ENCODE measurements at regions of chr14 and their contacts with region 1.

Region 1: DNA sequence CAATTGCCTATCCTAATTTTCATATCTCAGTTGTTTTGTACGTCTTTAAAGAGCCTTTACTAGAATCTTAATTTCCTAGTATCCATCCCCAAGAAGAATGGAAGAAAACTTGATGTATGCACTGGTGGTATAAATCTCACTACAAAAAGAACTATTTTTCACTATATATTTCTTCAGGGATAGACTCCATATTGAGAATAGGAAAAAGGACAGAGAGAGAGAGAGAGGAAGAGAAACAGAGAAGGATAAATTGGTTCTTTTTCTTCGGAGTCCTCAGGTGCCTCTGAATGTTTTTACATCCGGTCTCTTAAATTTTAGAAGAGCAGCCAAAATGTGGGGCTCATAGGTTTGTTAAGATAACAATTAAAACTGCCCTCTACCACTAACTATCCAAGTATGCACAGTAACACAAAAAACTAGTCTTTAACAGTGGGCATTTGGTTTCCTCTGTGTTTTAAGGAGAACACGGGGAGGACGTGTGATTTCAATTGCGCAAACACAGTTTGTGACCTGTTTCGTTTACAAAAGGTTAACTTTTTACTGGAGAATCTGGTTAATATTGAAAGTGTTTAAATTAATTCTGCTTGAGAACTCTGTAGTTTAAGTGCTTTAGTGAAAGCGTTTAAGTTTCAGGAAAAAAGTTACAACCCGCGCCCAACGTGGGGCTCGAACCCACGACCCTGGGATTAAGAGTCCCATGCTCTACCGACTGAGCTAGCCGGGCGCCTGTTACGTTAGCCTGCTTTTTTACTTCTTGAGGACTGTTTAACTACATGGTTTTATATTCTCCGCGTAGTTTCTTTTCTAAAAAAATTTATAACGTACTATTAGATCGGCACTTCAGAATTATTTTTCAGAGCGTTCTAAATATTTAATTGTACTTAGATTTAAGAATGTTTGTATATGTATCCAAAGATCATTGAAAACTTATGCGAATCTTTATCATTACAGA is 5.1 kb upstream of the PSMA3 start:
- DNase-seq: peak; percentile 72 to 89
- ATAC-seq: peak; percentile 89
- H3K4me3 ChIP-seq: peak overlapping the region; percentile 97 to 99
- H3K27ac ChIP-seq: no peak overlapping the region
- H3K4me1 ChIP-seq: no peaks in the 10 kb centered on the region
- H3K27me3 ChIP-seq: no peaks in the 10 kb centered on the region

Region 2: DNA sequence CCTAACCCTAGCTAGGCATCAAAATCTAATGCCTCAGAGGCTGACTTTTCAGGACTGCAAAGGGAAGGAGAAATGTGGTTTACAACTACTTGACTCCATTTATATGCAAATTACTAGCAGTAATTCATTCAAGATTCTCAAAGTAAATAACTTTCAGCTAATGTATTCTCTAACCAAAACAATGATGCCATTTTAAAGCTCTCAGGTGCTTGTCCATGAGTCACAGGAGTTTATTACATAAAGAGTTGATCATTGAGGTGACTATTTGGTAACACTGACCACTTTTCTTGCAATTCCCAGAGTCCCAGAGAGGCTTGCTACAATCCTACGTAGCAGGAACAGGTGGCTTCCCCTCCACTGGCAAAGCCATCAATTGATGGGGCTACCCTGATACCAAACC is 264.6 kb before region 1 on chr14:
- intact Hi-C with region 1: no loop called
- DNase-seq: no peak
- ATAC-seq: no peak
- H3K4me3 ChIP-seq: no peak overlapping the region
- H3K27ac ChIP-seq: no peak overlapping the region
- H3K4me1 ChIP-seq: peaks cover 2 to 4% of the 10 kb centered on the region in 2 donors
- H3K27me3 ChIP-seq: no peaks in the 10 kb centered on the region

Region 3: GRCh38 chr14:58199726-58200479 is 39.6 kb before region 1 on chr14 and contains the start of gene ACTR10:
- intact Hi-C with region 1: loop called in 1 of 2 experiments (anchors 2 kb)
- DNase-seq: peak; percentile 92 to 96
- ATAC-seq: peak; percentile 97
- H3K4me3 ChIP-seq: peak within 1 kb of the TSS; percentile 75 to 87
- H3K27ac ChIP-seq: peak within 1 kb of the TSS; percentile 89 to 96
- H3K4me1 ChIP-seq: peaks cover 0 to 2% of the 10 kb centered on the region in 2 donors
- H3K27me3 ChIP-seq: no peaks in the 10 kb centered on the region
- total RNA-seq, gene ACTR10: 66.9 to 73.0 TPM

Region 4: GRCh38 chr14:58216544-58216943 is 23.0 kb before region 1 on chr14:
- intact Hi-C with region 1: no loop called
- DNase-seq: no peak
- ATAC-seq: no peak
- H3K4me3 ChIP-seq: no peak overlapping the region
- H3K27ac ChIP-seq: no peak overlapping the region
- H3K4me1 ChIP-seq: no peaks in the 10 kb centered on the region
- H3K27me3 ChIP-seq: no peaks in the 10 kb centered on the region